ENCODE measurements at regions of chr2 and their contacts with region 1.

Region 1: DNA sequence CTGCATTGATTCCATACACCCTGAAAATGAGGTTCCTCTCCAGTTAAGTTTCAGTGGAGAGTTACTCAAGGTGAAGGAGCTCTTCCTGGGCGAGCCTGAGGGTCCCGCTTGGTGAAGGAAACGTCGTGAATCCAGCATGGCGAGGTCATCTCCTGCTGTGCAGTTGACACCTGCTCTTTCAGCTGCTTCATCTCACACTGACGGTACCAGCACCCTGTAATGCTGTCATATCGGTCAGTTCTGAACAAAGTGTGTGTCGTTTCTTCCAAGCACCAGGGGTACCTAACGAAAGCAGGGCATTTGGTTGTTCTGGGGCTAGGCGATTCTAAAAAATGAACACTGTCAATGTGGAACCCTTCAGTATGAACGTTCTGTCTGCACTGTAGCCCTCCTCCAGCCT is 52.6 kb downstream of the ITGB1BP1 start:
- DNase-seq: no peak
- H3K4me3 ChIP-seq: no peak overlapping the region
- H3K27ac ChIP-seq: peak overlapping the region; percentile 79
- H3K27me3 ChIP-seq: no peaks in the 10 kb centered on the region
- CTCF ChIP-seq: no peak

Region 2: DNA sequence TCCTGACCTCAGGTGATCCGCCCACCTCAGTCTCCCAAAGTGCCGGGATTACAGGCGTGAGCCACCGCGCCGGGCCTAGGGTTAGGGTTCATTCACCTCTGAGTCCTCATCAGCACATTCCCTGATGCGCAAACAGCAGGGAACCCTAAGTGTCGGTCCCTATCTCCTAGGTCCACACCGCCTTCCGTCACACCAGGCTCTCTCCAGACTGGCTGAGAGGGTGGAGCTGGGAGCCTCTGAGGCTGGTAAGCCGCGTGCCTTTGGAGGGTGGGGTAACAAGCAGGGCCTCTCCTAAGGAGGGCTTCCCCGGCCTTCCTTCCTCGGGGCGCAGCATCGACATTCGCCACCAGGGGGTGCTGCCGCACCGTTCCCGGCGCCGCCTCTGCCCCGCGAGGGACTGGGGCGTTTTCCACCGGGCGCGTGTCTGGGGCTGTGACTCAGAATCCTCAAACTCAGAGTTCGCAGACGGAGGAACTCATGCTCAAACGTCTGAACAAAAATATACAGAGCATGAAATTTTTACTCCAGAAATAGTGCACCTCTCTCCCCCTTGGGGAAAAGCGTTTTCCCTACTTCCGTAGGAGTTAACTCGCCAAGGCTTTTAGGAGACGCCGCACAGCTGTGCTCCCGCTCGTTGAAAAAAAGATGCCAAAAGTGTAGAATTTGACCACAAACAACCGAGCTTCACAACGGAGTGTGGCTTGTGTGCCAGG is 228.0 kb before region 1 on chr2:
- CTCF ChIA-PET with region 1: interaction called, 64 read pairs
- POLR2A ChIA-PET with region 1: interaction called, 5 read pairs
- DNase-seq: peak; percentile 84
- H3K4me3 ChIP-seq: peak overlapping the region; percentile 37
- H3K27ac ChIP-seq: peak overlapping the region; percentile 81
- H3K27me3 ChIP-seq: no peaks in the 10 kb centered on the region
- CTCF ChIP-seq: peak; percentile 96

Region 3: GRCh38 chr2:9178904-9179571 is 191.7 kb before region 1 on chr2:
- CTCF ChIA-PET with region 1: interaction called, 12 read pairs
- POLR2A ChIA-PET with region 1: no interaction called
- DNase-seq: peak; percentile 69
- H3K4me3 ChIP-seq: no peak overlapping the region
- H3K27ac ChIP-seq: peak overlapping the region; percentile 96
- H3K27me3 ChIP-seq: no peaks in the 10 kb centered on the region
- CTCF ChIP-seq: no peak

Region 4: GRCh38 chr2:9205963-9206948 is 164.5 kb before region 1 on chr2 and contains the start of gene ASAP2:
- CTCF ChIA-PET with region 1: interaction called, 20 read pairs
- POLR2A ChIA-PET with region 1: interaction called, 4 read pairs
- DNase-seq: no peak
- H3K4me3 ChIP-seq: peak within 1 kb of the TSS; percentile 81
- H3K27ac ChIP-seq: no peak within 1 kb of the TSS
- H3K27me3 ChIP-seq: no peaks in the 10 kb centered on the region
- CTCF ChIP-seq: peak; percentile 75
- polyA plus RNA-seq, gene ASAP2: 24.6 and 30.0 TPM in 2 replicates

Region 5: GRCh38 chr2:9356292-9356691 is 14.5 kb before region 1 on chr2:
- CTCF ChIA-PET with region 1: interaction called, 10 read pairs
- POLR2A ChIA-PET with region 1: no interaction called
- DNase-seq: no peak
- H3K4me3 ChIP-seq: no peak overlapping the region
- H3K27ac ChIP-seq: no peak overlapping the region
- H3K27me3 ChIP-seq: no peaks in the 10 kb centered on the region
- CTCF ChIP-seq: no peak

Region 6: DNA sequence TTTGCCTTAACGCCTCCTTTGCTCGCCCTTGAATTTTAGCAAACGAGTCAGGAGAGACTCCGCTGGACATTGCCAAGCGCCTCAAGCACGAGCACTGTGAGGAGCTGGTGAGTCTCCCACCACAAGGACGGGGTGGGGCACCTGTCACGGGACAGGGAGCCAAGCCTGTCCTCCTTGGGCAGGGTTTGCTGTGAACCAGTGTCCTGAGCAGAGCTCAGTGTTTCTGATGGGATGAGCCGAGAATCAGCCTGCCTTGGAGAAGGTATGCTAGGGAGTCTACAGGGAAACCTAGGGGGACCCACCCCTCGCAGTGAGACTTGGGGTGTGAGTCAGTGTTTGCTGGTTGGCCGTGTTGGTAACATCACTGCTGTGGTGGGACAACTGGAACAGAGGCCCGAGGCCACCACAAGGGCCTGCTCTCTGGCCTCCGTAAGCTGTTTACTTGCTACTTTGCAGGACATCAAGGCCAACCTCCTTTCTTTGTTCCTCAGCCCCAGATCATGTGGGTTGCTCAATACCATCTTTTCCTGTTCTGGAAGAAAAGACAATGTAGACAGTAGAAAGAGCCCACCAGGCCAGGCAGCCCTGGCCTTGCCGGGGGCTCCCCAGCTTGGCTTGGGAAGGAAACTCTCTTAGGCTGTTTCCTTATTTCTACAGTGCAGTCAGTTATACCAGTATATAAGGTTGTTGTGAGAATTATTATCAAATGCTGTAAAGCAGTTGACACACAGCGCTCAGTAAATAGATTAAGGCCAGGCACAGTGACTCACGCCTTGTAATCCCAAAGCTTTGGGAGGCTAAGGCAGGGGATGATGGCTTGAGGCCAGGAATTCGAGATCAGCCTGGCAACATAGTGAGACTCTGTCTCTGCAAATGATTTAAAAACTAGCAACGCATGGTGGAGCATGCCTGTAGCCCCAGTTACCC is 10.2 kb after region 1 on chr2:
- CTCF ChIA-PET with region 1: interaction called, 18 read pairs
- POLR2A ChIA-PET with region 1: interaction called, 4 read pairs
- DNase-seq: peak; percentile 81
- H3K4me3 ChIP-seq: no peak overlapping the region
- H3K27ac ChIP-seq: peak overlapping the region; percentile 94
- H3K27me3 ChIP-seq: no peaks in the 10 kb centered on the region
- CTCF ChIP-seq: no peak